OCI-LY7 (cell line): ENCODE measurements at regions of chr20 and their contacts with region 1.

Region 1: DNA sequence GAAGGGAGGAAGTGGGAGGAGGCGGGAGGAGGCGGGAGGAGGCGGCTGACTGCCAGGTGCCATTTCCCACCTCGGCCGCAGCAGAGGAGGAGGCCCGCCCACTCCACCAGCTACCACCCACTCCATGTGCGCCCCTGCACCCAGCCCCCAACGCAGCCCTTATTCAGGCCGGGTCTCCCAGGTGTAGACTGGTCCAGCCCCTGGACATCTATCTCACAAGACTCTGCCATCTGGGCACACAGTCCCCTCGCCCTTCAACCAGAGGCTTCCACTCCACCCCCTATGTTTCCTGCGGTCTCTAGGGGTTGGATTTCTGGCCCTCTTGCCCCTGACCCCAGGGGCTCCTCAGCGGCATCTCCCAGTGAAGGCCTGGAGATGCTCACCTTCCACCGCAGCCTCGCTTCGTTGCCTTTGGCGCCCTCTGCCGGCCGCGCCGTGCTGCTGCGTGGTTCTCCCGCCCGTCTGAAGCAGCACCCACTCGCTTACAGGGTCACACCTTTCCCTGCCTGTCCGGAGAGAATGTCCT is 32.6 kb upstream of the FAM83D start:
- DNase-seq: peak; percentile 81
- H3K4me3 ChIP-seq: peak overlapping the region; percentile 52
- H3K27ac ChIP-seq: peak overlapping the region; percentile 91
- H3K4me1 ChIP-seq: peaks cover 53% of the 10 kb centered on the region
- CTCF ChIP-seq: peak; percentile 86

Region 2: GRCh38 chr20:38645980-38646858 is 247.4 kb before region 1 on chr20:
- CTCF ChIA-PET with region 1: no interaction called
- POLR2A ChIA-PET with region 1: no interaction called
- intact Hi-C with region 1: loop called (anchors 1 kb)
- DNase-seq: peak; percentile 88
- H3K4me3 ChIP-seq: peak overlapping the region; percentile 56
- H3K27ac ChIP-seq: no peak overlapping the region
- H3K4me1 ChIP-seq: peaks cover 4% of the 10 kb centered on the region
- CTCF ChIP-seq: peak; percentile 90

Region 3: DNA sequence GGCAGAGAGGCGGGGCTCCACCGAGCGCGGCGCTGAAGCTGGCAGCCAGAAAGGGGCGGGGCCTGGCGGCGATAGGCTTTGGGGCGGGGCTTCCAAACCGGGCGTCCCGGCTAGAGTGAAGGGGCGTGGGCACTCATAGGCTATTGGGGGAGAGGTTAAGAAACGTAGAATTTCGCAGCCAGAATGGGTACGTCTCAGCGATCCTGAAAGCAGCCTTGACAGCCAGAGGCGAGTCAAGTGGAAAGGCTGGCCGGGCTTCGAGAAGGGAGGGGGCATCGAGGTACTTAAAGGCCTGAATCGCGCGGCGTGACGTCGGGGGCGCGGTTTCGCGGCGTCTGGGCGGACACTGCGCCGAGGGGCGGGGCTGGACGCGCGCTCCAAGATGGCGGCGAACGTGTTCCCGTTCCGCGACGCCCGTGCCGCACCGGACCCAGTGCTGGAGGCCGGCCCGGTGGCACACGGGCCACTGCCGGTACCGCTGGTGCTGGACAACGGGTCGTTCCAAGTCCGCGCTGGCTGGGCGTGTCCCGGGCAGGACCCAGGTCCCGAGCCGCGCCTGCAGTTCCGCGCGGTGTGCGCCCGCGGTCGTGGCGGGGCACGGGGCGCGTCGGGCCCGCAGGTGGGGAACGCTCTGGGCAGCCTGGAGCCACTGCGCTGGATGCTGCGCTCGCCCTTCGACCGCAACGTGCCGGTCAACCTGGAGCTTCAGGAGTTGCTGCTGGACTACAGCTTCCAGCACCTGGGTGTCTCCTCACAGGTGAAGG is 145.3 kb before region 1 on chr20 and contains the start of gene ACTR5:
- CTCF ChIA-PET with region 1: interaction called, 7 read pairs
- POLR2A ChIA-PET with region 1: no interaction called
- intact Hi-C with region 1: loop called (anchors 1 kb)
- DNase-seq: peak; percentile 94
- H3K4me3 ChIP-seq: peak within 1 kb of the TSS; percentile 94
- H3K27ac ChIP-seq: peak within 1 kb of the TSS; percentile 62
- H3K4me1 ChIP-seq: peaks cover 24% of the 10 kb centered on the region
- CTCF ChIP-seq: no peak
- total RNA-seq, gene ACTR5: 21.1 and 22.2 TPM in 2 replicates

Region 4: GRCh38 chr20:38842558-38842981 is 51.1 kb before region 1 on chr20:
- CTCF ChIA-PET with region 1: interaction called, 7 read pairs
- POLR2A ChIA-PET with region 1: interaction called, 8 read pairs
- intact Hi-C with region 1: loop called (anchors 2 kb)
- DNase-seq: peak; percentile 96
- H3K4me3 ChIP-seq: peak overlapping the region; percentile 57
- H3K27ac ChIP-seq: peak overlapping the region; percentile 99
- H3K4me1 ChIP-seq: peaks cover 83% of the 10 kb centered on the region
- CTCF ChIP-seq: no peak

Region 5: GRCh38 chr20:38875175-38875993 is 18.2 kb before region 1 on chr20:
- CTCF ChIA-PET with region 1: interaction called, 15 read pairs
- POLR2A ChIA-PET with region 1: interaction called, 85 read pairs
- intact Hi-C with region 1: loop called (anchors 1 kb)
- DNase-seq: peak; percentile 97
- H3K4me3 ChIP-seq: peak overlapping the region; percentile 54
- H3K27ac ChIP-seq: peak overlapping the region; percentile 97
- H3K4me1 ChIP-seq: peaks cover 96% of the 10 kb centered on the region
- CTCF ChIP-seq: no peak; the same call in 1 of the 2 replicates

Region 6: DNA sequence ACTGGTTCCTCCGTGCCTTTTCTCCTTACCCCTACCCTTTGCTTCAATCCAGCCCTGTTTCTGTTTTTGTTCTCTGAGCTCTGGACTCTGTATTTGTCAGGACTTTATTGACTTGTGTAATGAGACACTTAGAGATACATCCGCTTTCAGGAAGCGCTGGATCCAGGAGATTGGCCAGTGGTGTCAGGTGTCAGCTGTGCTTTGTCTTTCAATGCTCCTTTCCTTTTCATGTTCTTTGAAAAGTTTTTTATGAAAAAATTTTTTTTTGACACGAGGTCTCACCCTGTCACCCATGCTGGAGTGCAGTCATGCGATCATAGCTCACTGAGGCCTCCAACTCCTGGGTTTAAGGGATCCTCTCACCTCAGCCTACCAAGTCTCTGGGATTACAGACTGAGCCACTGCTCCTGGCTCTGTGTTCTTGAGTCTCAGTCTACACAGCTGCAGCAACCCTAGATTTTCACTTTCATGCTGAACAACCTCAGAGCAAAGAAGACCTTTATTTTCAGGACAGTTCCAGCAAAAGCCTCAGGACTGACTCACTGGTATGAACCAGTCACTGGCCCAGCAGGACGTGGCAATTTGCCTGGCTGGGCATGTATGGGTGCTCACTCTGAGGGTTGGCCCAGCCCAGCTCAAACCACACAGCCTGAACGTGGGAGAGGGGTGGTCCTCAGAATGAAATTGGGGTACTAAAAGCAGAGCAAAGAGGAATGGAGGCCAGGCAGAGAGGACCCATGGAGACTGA is 177.0 kb after region 1 on chr20:
- CTCF ChIA-PET with region 1: no interaction called
- POLR2A ChIA-PET with region 1: no interaction called
- intact Hi-C with region 1: no loop called
- DNase-seq: no peak
- H3K4me3 ChIP-seq: no peak overlapping the region
- H3K27ac ChIP-seq: no peak overlapping the region
- H3K4me1 ChIP-seq: no peaks in the 10 kb centered on the region
- CTCF ChIP-seq: no peak